Activated CD4-positive, alpha-beta memory T cell treated with anti-CD3 and anti-CD28 coated beads for 36 hours (primary cell): ENCODE measurements at regions of chr12 and their contacts with region 1.

Region 1: DNA sequence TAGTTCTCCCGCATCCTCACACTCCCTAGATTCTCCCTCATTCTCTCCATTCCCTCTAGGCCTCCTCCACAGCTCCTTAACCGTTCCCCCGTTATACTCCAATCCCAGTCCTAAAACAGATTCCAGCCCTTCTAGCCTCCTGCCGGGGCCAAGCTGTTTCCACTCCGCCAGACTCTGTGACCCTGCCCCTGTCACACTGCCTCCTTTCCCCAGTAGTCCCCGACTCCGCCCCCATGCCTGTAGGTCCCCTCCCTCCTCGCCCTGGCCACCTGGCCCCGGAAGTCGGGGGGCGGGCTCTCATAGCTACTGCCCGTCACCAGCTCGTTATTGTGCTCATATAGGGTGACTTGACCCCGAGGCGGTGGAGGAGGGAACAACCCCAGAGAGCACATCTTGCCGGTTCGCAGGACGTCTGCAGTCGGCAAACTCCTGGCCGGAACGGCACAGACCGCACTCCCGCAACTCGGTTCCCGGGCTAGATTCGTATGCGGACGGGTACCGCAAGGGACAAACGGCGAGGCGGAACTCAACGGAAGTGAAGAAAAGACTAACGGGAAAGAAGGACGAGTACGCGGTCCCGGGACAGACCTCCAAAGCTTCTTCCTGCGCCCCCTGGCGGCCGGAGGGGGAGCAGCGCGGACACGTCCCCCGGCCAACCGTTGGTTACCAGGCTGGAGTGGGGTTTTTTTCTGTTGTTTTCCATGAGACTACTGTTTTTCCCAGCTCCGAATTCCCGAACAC is at the start of gene AAAS:
- DNase-seq: peak; percentile 98
- H3K4me3 Mint-ChIP-seq: peak within 1 kb of the TSS; percentile 86
- H3K27ac Mint-ChIP-seq: peak within 1 kb of the TSS; percentile 94
- H3K4me1 Mint-ChIP-seq: peaks cover 38% of the 10 kb centered on the region
- H3K27me3 Mint-ChIP-seq: no peaks in the 10 kb centered on the region
- total RNA-seq, gene AAAS: 74.5 to 80.7 TPM

Region 2: DNA sequence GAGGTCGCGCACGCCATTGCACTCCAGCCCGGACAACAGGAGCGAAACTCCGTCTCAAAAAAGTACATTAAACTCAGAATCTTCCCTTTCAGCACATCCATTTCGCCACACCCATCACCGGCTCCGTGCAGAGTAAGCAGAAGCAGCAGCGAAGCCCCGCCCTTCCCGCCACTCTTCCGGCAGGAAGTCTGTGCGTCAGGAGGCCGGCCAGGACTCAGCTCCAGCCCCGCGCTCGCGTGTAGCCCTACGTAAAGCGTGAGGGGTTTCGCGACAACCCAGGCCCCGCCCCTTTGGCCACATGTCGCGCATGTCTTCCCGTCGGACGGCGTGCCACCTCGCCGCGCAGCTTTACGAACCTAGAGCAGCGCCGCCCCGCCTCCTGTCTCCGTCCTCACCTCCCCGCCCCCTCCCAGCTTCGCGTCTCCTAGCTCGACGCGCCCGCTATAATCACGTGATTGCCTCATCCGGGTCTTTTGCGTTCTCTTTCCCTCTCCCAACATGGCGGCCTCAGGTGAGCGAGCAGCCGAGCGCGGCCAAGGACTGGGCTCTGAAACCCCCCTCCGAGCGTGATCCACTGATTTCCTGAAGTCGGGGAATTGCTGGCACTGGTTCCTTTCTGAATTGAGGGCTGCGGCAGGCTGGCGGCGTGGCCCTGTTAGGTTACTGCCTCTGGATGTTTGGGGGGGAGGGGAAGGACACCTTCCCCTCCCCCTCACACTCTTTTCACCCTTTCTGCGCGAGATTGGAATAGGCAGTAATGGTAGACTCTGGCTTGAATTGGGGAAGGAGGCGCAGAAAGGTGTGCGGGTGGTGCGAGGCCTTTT is 315.0 kb before region 1 on chr12 and contains the start of gene EIF4B:
- CTCF ChIA-PET with region 1: interaction called, 3 read pairs
- POLR2A ChIA-PET with region 1: no interaction called
- intact Hi-C with region 1: loop called (anchors 1 kb)
- DNase-seq: peak; percentile 100
- H3K4me3 Mint-ChIP-seq: peak within 1 kb of the TSS; percentile 98
- H3K27ac Mint-ChIP-seq: peak within 1 kb of the TSS; percentile 98
- H3K4me1 Mint-ChIP-seq: peaks cover 50% of the 10 kb centered on the region
- H3K27me3 Mint-ChIP-seq: no peaks in the 10 kb centered on the region
- total RNA-seq, gene EIF4B: 686 to 718 TPM

Region 3: DNA sequence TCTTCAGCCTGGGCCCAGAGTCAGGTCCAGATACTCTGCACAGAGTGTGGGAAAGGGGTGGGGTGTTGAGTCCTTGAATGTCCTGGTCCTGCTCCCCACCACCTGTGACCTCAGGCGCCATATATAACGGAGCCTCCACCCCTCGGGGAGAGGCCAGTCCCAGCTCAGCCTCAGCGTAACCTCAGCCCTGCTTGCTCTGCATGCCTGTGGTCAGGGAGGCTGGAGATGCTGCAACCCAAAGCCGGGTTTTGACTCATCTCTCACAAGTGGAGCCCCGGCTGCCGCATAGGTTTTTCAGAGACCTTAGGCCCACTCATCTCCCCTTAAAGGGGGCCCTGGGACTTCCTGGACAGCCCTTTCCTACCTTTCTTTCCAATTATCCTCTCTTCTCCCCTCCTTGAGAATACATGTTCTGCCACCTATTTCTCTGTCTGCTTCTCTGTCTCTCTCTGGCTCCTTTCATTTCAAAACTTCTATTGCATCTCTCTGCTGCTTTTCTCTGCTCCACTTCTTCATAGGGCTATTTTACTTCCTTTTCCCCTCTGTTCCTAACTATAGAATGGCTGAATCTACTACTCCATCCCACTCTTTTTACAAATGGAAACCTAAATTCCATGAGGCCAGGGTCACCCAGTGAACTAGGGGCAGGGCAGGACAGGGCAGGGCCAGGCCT is 115.4 kb before region 1 on chr12:
- CTCF ChIA-PET with region 1: interaction called, 111 read pairs
- POLR2A ChIA-PET with region 1: interaction called, 5 read pairs
- intact Hi-C with region 1: no loop called
- DNase-seq: peak; percentile 92
- H3K4me3 Mint-ChIP-seq: peak overlapping the region; percentile 84
- H3K27ac Mint-ChIP-seq: peak overlapping the region; percentile 83
- H3K4me1 Mint-ChIP-seq: peaks cover 77% of the 10 kb centered on the region
- H3K27me3 Mint-ChIP-seq: no peaks in the 10 kb centered on the region

Region 4: GRCh38 chr12:53287741-53288216 is 33.5 kb before region 1 on chr12:
- CTCF ChIA-PET with region 1: interaction called, 12 read pairs
- POLR2A ChIA-PET with region 1: interaction called, 3 read pairs
- intact Hi-C with region 1: no loop called
- DNase-seq: peak; percentile 76
- H3K4me3 Mint-ChIP-seq: no peak overlapping the region
- H3K27ac Mint-ChIP-seq: peak overlapping the region; percentile 68
- H3K4me1 Mint-ChIP-seq: peaks cover 19% of the 10 kb centered on the region
- H3K27me3 Mint-ChIP-seq: no peaks in the 10 kb centered on the region

Region 5: DNA sequence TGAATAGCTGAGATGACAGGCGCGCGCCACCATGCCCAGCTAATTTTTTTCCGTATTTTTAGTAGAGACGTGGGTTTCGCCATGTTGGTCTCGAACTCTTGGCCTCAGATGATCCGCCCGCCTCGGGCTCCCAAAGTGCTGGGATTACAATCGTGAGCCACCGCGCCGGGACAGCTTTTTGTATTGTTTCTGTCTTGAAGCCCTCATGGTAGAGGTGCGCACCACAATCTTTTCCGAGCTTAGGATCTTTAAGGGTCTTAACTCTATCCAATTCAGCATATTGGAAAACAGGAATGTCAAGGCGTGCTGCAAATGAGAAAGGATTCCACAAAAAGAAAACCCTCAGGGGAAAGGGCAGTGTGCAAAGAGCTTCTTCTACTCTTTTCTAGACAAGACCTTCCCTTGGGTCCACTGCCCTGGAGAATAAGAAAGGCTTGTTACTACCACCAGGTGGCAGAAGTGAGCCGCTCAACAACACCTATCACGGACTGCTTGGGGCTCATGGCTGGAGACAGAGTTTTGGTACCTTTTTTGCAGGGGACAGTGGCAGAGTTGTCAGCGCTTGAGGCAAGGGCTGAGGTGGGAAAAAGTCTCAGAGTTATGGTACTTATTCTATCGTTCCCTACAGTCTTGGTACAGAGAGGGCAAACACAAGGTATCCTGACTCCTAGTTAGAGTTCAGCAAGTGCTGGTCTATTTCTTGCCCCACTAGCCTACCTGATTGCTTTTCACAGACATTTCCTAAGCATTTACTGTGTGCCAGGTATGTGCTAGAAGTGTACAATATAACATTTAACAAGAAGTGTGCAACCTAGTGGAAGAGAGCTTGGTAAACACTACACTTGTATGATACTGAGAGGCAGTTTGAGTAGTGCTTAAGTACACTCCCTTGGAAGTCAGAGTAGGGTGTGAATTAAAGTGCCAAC is 31.4 kb after region 1 on chr12:
- CTCF ChIA-PET with region 1: interaction called, 252 read pairs
- POLR2A ChIA-PET with region 1: no interaction called
- intact Hi-C with region 1: no loop called
- DNase-seq: peak; percentile 90
- H3K4me3 Mint-ChIP-seq: no peak overlapping the region
- H3K27ac Mint-ChIP-seq: peak overlapping the region; percentile 12
- H3K4me1 Mint-ChIP-seq: peaks cover 9% of the 10 kb centered on the region
- H3K27me3 Mint-ChIP-seq: no peaks in the 10 kb centered on the region

Region 6: DNA sequence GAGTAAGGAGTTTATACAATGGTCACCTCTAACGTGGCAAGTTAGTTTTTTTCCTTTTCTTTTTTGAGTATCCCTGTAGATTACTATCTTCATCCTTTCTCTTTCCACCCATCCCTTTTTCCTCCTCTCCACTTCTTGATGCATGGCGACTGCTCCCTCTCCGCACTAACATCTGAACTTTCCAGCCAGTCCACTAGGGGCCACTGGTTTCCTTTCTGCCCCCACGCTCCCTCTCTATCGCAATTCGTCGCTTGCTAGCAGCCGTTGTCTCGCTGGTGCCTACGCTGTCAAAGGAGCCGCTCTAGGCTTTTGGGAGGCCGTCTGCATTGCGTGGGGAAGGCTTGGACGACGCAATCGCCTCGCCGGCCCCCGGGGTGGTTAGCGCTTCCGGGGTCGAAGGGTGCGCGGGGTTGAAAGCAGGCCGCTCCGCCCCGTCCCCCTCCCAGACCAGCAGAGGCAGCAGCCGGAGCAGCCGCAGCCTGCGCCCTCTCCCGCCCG is 130.5 kb after region 1 on chr12 and contains the start of gene PCBP2:
- CTCF ChIA-PET with region 1: no interaction called
- POLR2A ChIA-PET with region 1: no interaction called
- intact Hi-C with region 1: loop called (anchors 1 kb)
- DNase-seq: peak; percentile 99
- H3K4me3 Mint-ChIP-seq: peak within 1 kb of the TSS; percentile 94
- H3K27ac Mint-ChIP-seq: peak within 1 kb of the TSS; percentile 98
- H3K4me1 Mint-ChIP-seq: peaks cover 23% of the 10 kb centered on the region
- H3K27me3 Mint-ChIP-seq: no peaks in the 10 kb centered on the region
- total RNA-seq, gene PCBP2: 897 to 926 TPM